Heart right ventricle (tissue), 16 donors: ENCODE measurements at regions of chr6 and their contacts with region 1.

Region 1: DNA sequence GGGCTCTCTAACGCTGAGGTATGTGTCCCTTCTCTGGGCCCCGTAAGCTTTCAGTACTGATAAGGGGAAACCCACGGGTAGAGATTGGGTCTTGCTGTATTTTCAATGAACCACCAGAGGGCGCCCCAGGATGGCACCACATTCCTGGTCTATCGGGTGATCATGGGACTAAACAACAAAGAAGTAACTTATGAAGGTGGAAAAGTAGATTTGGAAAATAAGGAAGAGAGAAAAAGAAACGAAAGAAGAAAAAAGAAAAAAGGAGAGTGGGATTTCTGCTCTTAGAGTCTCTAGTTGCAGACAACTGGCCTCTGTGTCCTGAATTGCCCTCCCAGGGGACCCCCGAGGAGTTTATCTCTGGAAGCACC is 93.8 kb downstream of the GMPR start:
- DNase-seq: peak; percentile 56 to 86
- ATAC-seq: peak; percentile 68 to 93 (median 80)
- H3K4me3 ChIP-seq: peak overlapping the region in 2 of 10 donors; percentile 0 to 24
- H3K27ac ChIP-seq: peak overlapping the region in 5 of 10 donors; percentile 1 to 41 (median 31)
- H3K4me1 ChIP-seq: peaks cover 7 to 61% (median 39%) of the 10 kb centered on the region in 9 donors
- H3K27me3 ChIP-seq: no peaks in the 10 kb centered on the region
- CTCF ChIP-seq: peak; percentile 84 to 95 (median 92)

Region 2: GRCh38 chr6:16409531-16410441 is 77.6 kb after region 1 on chr6:
- intact Hi-C with region 1: loop called (anchors 1 to 5 kb)
- DNase-seq: peak; percentile 50 to 71
- ATAC-seq: peak; percentile 35 to 84 (median 68)
- H3K4me3 ChIP-seq: no peak overlapping the region
- H3K27ac ChIP-seq: no peak overlapping the region
- H3K4me1 ChIP-seq: peaks cover 0 to 64% (median 19%) of the 10 kb centered on the region in 9 donors
- H3K27me3 ChIP-seq: no peaks in the 10 kb centered on the region
- CTCF ChIP-seq: peak; percentile 55 to 90 (median 83)

Region 3: DNA sequence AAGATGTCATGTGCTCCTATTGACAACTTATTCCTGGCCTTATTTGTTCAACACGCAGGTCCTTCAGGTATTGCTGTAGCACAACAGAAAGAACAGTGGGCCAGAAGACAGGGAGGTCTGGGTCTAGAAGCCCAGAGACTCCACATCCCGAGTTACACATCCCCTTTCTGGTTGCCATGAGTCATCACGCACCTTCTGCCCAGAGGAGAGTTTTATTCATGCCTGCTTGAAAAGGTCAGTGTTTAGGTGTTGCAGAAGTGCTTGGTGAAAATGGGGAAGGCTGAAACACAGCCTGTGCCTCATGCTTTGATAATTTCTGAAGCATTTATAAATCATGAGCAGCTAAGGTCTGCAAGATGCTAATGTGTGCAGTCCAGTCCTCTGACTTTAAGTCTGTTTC is 162.6 kb after region 1 on chr6:
- intact Hi-C with region 1: loop called in 1 of 10 experiments (anchors 10 kb)
- DNase-seq: no peak
- ATAC-seq: peak in 2 of 8 donors; percentile 56 to 70
- H3K4me3 ChIP-seq: no peak overlapping the region
- H3K27ac ChIP-seq: no peak overlapping the region
- H3K4me1 ChIP-seq: peaks cover 7 to 44% (median 17%) of the 10 kb centered on the region in 9 donors
- H3K27me3 ChIP-seq: no peaks in the 10 kb centered on the region
- CTCF ChIP-seq: no peak

Region 4: DNA sequence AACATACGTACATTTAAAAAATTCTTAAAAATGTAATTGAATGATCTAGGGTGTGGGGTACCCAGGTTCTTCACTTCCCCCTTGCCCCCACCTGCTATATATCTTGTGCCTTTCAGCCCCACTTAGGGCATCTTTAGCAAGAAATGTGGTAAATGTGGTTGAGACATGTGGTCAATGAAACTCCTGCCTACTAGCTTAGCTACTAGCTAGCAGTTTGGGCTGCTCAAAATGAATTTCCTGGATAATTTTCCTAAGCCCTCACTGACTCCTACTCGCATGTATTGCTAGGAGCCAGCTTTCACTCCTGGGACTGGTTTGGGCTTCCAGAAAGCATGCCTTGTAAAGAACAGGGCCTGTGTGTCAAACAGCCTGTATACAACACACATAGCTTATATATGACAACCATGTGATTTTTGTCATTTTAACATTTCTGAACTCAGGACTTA is 171.8 kb after region 1 on chr6:
- intact Hi-C with region 1: loop called in 2 of 10 experiments (anchors 10 kb)
- DNase-seq: no peak
- ATAC-seq: no peak
- H3K4me3 ChIP-seq: no peak overlapping the region
- H3K27ac ChIP-seq: peak overlapping the region in 1 of 10 donors; percentile 9
- H3K4me1 ChIP-seq: peaks cover 0 to 32% (median 18%) of the 10 kb centered on the region in 9 donors
- H3K27me3 ChIP-seq: no peaks in the 10 kb centered on the region
- CTCF ChIP-seq: no peak

Region 5: GRCh38 chr6:16514249-16514648 is 182.1 kb after region 1 on chr6:
- intact Hi-C with region 1: loop called in 8 of 10 experiments (anchors 2 to 10 kb)
- DNase-seq: no peak
- ATAC-seq: peak in 5 of 8 donors; percentile 10 to 51 (median 34)
- H3K4me3 ChIP-seq: no peak overlapping the region
- H3K27ac ChIP-seq: no peak overlapping the region
- H3K4me1 ChIP-seq: peaks cover 4 to 57% (median 39%) of the 10 kb centered on the region in 9 donors
- H3K27me3 ChIP-seq: no peaks in the 10 kb centered on the region
- CTCF ChIP-seq: peak in 7 of 9 donors; percentile 36 to 54 (median 51)

Region 6: DNA sequence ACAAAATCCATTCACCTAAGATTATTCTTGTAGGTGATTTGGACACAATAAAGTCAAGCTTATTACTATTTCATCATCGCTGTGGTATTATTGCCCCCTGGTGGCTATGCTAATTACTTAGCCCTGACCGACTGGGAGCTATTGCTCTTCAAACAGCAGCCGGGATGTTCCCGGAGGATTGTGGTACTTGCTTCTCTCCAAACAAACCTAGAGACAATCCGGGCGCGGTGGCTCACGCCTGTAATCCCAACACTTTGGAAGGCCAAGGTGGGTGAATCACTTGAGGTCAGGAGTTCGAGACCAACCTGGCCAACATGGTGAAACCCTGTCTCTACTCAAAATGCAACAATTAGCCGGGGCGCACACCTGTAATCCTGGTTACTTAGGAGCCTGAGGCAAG is 754.3 kb after region 1 on chr6:
- intact Hi-C with region 1: loop called in 3 of 10 experiments (anchors 5 to 10 kb)
- DNase-seq: peak in 1 of 2 donors; percentile 64
- ATAC-seq: peak; percentile 49 to 86 (median 74)
- H3K4me3 ChIP-seq: no peak overlapping the region
- H3K27ac ChIP-seq: no peak overlapping the region
- H3K4me1 ChIP-seq: peaks cover 0 to 11% (median 0%) of the 10 kb centered on the region in 9 donors
- H3K27me3 ChIP-seq: peaks cover 0 to 9% (median 0%) of the 10 kb centered on the region in 7 donors
- CTCF ChIP-seq: peak; percentile 41 to 78 (median 71)